Activated CD4-positive, alpha-beta memory T cell treated with anti-CD3 and anti-CD28 coated beads for 36 hours (primary cell): ENCODE measurements at regions of chr6 and their contacts with region 1.

Region 1: DNA sequence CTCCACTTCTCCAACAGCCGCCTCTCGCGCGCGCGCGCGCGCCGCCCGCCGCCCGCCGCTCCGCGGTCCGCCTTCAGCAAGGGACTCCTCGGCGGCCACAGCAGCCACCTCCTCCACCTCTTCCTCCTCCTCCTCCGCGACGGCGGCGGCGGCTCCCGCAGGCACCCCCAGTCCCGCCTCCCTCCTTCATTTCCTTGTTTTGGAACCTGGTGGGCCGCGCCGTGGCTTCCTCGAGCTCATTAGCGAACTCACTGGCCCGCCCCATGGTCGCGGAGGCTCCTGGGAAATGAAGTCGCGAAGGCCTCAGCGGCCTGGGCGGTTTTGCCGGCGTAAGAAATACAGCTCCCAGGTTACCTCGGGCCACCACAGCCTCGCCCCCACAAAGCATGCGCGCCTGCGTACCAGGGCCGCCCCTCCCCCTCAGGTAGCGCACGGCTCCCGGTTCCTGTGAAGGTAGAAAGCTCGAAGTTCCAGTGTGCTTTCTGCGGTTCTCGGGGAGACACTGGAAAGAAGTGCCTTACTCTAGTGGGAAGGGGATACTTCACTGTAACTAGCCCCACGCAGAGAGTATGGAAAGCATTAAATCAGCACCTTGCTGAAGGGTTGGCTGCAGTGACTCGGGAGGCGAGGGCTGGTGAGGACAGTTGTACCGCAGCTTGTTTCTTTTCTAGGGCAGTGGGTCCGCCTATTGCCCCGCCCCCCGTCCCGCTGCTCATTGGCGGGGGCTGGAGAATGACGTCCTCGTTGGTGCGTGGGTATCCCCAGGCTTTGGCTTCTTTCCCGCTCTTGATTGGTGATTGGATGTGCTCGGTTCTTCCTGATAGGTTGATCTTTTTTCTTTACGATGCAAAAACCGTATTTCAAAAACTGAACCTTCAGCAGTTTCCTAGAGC is at the start of gene CDK19:
- DNase-seq: peak; percentile 99
- H3K4me3 Mint-ChIP-seq: peak within 1 kb of the TSS; percentile 98
- H3K27ac Mint-ChIP-seq: peak within 1 kb of the TSS; percentile 100
- H3K4me1 Mint-ChIP-seq: peaks cover 34% of the 10 kb centered on the region
- H3K27me3 Mint-ChIP-seq: no peaks in the 10 kb centered on the region
- total RNA-seq, gene CDK19: 18.2 to 18.4 TPM

Region 2: DNA sequence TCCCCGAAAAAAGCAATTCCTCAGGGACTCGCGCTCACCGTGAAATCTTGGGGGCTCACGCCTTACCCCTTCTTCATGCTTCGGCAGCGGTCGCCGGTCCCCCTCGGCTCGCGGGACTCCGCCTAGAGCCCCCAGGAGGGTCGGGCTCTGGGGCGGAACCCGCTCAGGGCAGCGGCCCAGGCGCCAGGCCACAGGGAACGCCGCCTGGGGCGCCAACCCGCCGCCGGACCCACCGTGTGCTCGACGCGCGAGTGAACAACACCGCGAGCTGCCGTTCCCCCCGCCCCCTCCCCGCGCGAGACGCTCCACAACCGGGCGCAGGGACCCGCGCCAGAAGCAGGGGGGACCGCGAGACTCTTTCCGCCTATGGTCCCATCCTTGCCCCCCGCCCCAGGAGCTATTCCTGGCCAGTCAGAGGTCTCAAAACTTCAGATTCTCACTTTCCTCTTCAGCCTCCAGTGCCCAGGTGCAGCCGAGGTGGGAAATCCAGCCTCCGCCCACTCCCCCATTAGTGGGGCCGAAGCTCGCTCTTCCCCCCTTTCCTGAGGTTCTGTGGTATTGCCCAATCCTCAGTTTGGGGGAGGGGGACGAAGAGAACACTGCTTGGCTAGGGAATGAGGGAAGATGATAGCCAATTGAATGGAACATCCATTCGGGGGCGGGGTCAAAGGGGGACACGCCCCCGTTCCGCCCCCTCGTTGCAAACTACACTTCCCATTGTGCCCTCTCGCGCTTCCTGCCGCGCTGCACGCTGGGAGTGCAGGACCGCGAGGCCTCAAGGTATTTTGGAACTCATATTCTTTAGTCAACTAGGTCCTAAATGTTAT is 635.8 kb before region 1 on chr6 and contains the start of gene WASF1:
- CTCF ChIA-PET with region 1: no interaction called
- POLR2A ChIA-PET with region 1: no interaction called
- intact Hi-C with region 1: loop called (anchors 1 kb)
- DNase-seq: peak; percentile 94
- H3K4me3 Mint-ChIP-seq: peak within 1 kb of the TSS; percentile 85
- H3K27ac Mint-ChIP-seq: no peak within 1 kb of the TSS
- H3K4me1 Mint-ChIP-seq: peaks cover 5% of the 10 kb centered on the region
- H3K27me3 Mint-ChIP-seq: peaks cover 10% of the 10 kb centered on the region
- total RNA-seq, gene WASF1: 1.9 to 2.6 TPM

Region 3: DNA sequence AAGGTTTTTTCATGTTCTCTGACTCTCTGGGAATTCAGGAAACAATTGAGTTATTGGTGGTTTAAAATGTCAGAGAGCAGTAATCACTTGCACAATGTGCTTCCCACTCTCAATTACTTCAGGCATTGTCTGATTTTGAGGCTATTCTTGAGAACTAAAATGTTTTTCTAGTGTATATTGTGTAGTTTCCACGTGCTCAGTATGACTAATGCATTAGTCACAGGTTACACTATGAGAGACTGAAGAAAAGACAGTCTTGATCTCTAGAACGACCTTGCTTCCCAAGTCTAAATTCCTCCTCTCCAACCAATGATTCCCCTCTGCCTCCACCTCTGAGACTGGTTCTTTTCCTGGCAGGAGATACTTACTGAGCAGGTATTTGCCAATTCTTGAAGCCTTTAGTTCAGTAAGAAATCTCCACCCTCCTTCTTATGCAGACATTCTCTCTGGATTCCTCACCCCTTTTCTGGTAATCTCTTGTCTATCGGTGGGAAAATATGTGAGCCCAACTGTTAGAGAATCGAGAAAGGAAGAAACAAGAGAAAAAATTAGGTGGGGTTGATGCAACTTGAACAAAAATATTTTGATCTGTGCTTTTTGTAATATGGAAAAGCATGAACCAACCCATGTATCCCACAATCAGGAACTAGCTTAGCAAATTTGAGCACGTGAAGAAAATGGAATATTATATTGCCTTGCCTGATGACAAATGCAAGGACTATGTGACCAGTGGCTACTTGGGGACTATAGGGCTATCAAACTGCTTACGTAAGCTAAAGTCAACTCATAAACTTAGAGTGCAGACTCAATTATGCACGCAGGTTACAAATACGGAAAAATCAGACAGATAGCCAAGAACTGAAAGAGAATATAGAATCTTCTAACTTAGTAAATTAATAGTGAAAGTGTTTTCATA is 278.0 kb before region 1 on chr6:
- CTCF ChIA-PET with region 1: no interaction called
- POLR2A ChIA-PET with region 1: no interaction called
- intact Hi-C with region 1: loop called (anchors 1 kb)
- DNase-seq: no peak
- H3K4me3 Mint-ChIP-seq: no peak overlapping the region
- H3K27ac Mint-ChIP-seq: peak overlapping the region; percentile 15
- H3K4me1 Mint-ChIP-seq: peaks cover 41% of the 10 kb centered on the region
- H3K27me3 Mint-ChIP-seq: no peaks in the 10 kb centered on the region

Region 4: DNA sequence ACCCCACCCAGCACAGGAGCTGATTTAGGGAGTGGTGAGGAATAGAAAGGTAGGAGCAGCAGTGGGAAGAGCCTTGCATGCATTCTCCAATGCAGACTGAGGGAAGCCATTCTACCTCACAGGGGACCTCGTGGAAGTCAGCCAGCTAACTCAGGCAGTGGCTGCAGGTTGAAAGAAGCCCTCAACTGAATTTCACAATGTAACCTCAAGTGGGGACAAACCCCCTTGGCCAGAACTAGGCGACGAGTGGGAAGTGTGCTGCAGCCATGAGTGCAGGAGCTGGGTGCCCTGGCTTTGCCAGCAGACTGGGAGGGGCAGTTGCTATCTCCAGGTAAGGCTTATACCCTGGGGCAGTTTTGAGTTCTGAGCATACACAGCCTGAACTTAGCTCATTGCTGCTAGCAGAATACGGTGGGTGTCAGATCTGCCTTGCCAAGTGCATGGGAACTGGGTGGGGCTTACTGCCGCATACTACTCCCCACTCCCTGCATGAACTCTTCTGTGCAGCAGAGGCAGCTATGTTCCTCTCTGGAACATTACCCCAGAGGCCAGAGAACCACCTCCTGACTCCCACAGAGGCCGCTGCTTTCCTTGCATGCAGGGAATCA is 126.7 kb before region 1 on chr6:
- CTCF ChIA-PET with region 1: interaction called, 26 read pairs
- POLR2A ChIA-PET with region 1: interaction called, 14 read pairs
- intact Hi-C with region 1: no loop called
- DNase-seq: no peak
- H3K4me3 Mint-ChIP-seq: no peak overlapping the region
- H3K27ac Mint-ChIP-seq: no peak overlapping the region
- H3K4me1 Mint-ChIP-seq: peaks cover 24% of the 10 kb centered on the region
- H3K27me3 Mint-ChIP-seq: no peaks in the 10 kb centered on the region

Region 5: GRCh38 chr6:110944681-110945151 is 129.3 kb after region 1 on chr6:
- CTCF ChIA-PET with region 1: interaction called, 4 read pairs
- POLR2A ChIA-PET with region 1: interaction called, 13 read pairs
- intact Hi-C with region 1: loop called (anchors 1 kb)
- DNase-seq: peak; percentile 71
- H3K4me3 Mint-ChIP-seq: peak overlapping the region; percentile 16
- H3K27ac Mint-ChIP-seq: peak overlapping the region; percentile 71
- H3K4me1 Mint-ChIP-seq: peaks cover 10% of the 10 kb centered on the region
- H3K27me3 Mint-ChIP-seq: no peaks in the 10 kb centered on the region

Region 6: GRCh38 chr6:110981202-110981600 is 165.7 kb after region 1 on chr6:
- CTCF ChIA-PET with region 1: no interaction called
- POLR2A ChIA-PET with region 1: interaction called, 9 read pairs
- intact Hi-C with region 1: loop called (anchors 1 kb)
- DNase-seq: no peak
- H3K4me3 Mint-ChIP-seq: peak overlapping the region; percentile 98
- H3K27ac Mint-ChIP-seq: peak overlapping the region; percentile 97
- H3K4me1 Mint-ChIP-seq: peaks cover 50% of the 10 kb centered on the region
- H3K27me3 Mint-ChIP-seq: no peaks in the 10 kb centered on the region

Region 7: DNA sequence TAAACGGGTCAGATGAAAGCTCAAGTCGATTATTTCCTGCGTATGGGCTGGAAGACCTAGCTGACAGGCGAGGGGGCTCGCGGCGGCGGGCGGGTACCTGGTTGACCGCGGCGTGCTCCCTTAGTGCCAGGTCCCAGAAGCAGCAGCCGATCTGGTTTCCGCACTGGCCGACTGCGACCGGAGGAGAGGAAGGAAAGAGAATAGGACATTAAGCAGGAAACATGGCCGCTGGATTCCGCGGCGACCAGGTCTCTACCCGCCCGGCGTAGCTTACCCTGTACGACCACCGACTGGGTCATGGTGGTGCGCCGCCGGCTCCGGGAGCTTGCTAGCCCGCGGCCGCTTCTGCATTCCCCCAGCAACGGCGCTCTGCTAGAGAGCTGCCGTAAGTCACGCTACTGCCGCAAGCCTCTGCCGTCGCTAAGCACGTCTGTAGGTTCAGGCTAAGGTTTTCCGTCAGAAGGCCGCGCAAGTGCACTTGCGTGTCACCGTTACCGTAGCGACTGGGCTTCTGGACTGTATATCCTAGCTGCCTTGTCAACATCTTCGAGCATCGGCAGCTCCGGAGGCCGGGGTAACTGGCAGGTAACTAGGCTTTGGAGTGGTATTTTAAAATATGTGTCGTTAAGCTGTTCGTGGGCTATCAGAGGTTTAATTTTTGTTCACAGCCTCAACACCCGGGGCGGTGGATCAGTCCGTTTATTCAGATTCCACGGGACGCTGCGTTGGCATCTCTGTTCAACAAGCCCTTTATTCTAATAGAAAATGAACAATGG is 1271.9 kb after region 1 on chr6 and contains the starts of genes FAM229B and TUBE1:
- CTCF ChIA-PET with region 1: no interaction called
- POLR2A ChIA-PET with region 1: no interaction called
- intact Hi-C with region 1: loop called (anchors 2 kb)
- DNase-seq: peak; percentile 94
- H3K4me3 Mint-ChIP-seq: no peak within 1 kb of the TSS
- H3K27ac Mint-ChIP-seq: no peak within 1 kb of the TSS
- H3K4me1 Mint-ChIP-seq: peaks cover 9% of the 10 kb centered on the region
- H3K27me3 Mint-ChIP-seq: peaks cover 11% of the 10 kb centered on the region
- total RNA-seq, gene FAM229B: 6.7 to 7.3 TPM
- total RNA-seq, gene TUBE1: 37.2 to 39.2 TPM